Activated CD8-positive, alpha-beta T cell treated with anti-CD3 and anti-CD28 coated beads, Interleukin-2, amount 10 ng/mL, durations not matched to agents 7 days and 5 days (primary cell): ENCODE measurements at regions of chr10 and their contacts with region 1.

Region 1: DNA sequence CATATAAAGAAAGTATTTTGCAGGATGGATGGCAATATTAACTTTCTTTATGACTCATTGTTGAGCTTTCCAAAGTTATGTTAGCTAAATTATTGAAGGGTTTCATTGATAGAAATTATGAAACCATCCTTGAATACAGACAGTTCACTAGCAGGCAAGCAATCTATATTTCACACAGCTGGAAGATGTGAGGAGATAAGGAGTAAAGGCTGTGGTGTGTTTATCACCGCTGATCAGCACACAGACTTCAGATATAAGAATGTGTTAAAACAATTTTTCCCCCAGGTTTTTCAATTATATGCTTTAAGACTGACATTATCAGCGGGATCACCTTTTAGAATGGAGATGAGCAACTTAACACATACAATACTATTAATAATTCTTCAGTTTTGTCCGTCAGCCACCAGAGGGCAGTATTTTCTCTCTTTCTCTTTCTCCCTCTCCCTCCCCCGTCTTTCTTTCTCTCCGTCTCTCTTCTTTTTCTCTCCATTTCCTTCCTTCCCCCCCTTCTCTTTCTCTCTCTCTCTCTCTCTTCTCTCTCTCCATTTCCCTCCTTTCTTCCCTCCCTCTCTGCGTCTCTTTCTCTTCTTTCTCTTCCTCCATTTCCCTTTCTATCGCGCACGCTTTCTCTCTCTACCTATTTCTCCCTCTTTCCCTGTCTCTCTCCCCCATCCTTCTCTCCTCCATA is 62.9 kb upstream of the FAM171A1 start:
- DNase-seq: peak; percentile 63
- ATAC-seq: peak; percentile 80
- H3K4me3 Mint-ChIP-seq: peak overlapping the region; percentile 56
- H3K27ac Mint-ChIP-seq: no peak overlapping the region
- H3K4me1 Mint-ChIP-seq: peaks cover 1% of the 10 kb centered on the region
- H3K27me3 Mint-ChIP-seq: peaks cover 2% of the 10 kb centered on the region

Region 2: GRCh38 chr10:15374156-15374555 is 59.8 kb before region 1 on chr10:
- CTCF ChIA-PET with region 1: no interaction called
- POLR2A ChIA-PET with region 1: no interaction called
- DNase-seq: no peak
- ATAC-seq: no peak
- H3K4me3 Mint-ChIP-seq: no peak overlapping the region
- H3K27ac Mint-ChIP-seq: no peak overlapping the region
- H3K4me1 Mint-ChIP-seq: peaks cover 3% of the 10 kb centered on the region
- H3K27me3 Mint-ChIP-seq: peaks cover 57% of the 10 kb centered on the region

Region 3: GRCh38 chr10:15444090-15445005 is 10.4 kb after region 1 on chr10:
- CTCF ChIA-PET with region 1: interaction called, 11 read pairs
- POLR2A ChIA-PET with region 1: no interaction called
- DNase-seq: no peak
- ATAC-seq: no peak
- H3K4me3 Mint-ChIP-seq: no peak overlapping the region
- H3K27ac Mint-ChIP-seq: no peak overlapping the region
- H3K4me1 Mint-ChIP-seq: no peaks in the 10 kb centered on the region
- H3K27me3 Mint-ChIP-seq: peaks cover 15% of the 10 kb centered on the region